Posterior vena cava (tissue), 2 donors: ENCODE measurements at regions of chr3 and their contacts with region 1.

Region 1: GRCh38 chr3:15439476-15439875 is 12.1 kb downstream of the EAF1 start:
- DNase-seq: no peak

Region 2: GRCh38 chr3:15557511-15557946 is 118.1 kb after region 1 on chr3:
- intact Hi-C with region 1: loop called (anchors 10 kb)
- DNase-seq: no peak

Region 3: DNA sequence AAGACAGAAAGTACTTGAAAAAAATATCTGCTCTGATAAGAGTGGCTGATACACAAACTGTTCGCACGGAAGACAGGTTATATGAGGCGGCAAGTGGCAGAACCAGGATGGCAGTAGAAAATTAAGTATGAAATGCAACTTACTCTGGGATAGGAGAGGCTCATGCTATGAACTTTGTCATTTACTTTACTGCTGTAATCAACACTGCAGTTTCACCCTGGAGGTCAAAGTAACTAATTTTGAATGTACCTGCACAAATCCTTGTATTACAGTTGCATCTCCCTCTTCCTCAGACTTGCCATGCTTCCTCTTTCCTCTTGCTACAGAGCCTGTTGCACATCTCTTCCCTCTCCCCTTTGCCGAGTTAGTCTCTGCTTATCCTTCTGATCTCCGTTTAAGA is 123.1 kb after region 1 on chr3:
- intact Hi-C with region 1: loop called (anchors 10 kb)
- DNase-seq: no peak

Region 4: DNA sequence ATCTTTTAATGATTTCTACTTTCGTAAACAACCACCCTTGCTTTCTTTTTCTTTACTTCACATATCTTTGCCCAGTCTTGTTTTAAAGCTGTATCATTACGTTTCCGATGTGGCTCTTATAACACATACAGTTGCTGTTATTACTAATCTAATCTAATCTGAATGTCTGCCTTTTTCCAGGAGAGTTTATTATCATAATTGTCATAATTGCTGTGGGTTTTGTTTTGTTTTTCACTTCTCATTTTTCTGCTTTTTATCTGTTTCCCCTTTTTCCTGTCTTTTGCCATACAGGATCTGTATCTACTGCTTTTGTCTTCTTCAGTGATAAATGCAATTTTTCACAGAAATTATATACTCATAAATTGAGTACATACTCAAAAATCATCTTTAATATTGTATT is 137.0 kb after region 1 on chr3:
- intact Hi-C with region 1: no loop called
- DNase-seq: no peak